Panc1 (cell line): ENCODE measurements at regions of chr1 and their contacts with region 1.

Region 1: GRCh38 chr1:34946211-34946610 is 16.8 kb upstream of the DLGAP3 start:
- DNase-seq: no peak
- ATAC-seq: no peak
- H3K4me3 ChIP-seq: no peak overlapping the region
- H3K27ac ChIP-seq: no peak overlapping the region
- H3K4me1 ChIP-seq: no peaks in the 10 kb centered on the region
- H3K27me3 ChIP-seq: peaks cover 5% of the 10 kb centered on the region; the same call in 1 of the 2 replicates
- CTCF ChIP-seq: no peak

Region 2: DNA sequence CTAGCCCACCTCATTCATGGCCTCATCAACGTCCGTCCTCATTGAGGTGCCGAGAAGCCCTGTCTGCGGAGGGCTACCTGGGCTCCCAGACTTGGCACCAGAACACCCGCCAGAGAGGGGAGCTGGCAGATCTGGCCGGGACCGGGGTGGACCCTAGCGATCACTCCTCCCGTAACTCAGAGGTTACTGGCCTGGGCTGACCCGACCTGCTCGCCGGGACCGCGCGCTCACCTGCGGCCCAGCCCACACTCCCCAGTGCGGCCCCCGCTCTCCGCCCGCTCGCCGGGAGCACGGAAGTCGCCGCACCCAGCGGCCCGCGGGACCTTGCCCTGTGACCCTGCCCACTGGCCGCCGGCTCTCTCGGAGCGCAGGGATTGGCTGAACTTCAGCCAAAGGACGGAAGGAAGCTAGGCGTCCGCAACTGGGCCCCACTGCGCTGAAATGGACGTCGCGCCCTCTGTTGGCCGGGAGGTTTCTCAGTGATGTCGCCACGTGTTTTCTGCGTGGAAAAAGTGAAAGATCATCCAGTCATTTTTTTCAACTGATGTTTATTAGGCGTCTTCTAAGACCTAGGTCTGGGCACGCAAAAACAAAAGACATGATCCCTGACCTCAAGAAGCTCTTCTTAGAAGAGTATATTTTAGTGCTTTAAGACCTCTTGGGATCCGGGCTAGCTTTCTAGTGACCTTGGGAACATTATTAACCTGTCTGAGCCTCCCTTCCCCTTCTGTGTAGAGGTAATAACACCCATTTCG is 86.6 kb before region 1 on chr1 and contains the start of gene SMIM12:
- CTCF ChIA-PET with region 1: no interaction called
- POLR2A ChIA-PET with region 1: interaction called, 14 read pairs
- in situ Hi-C with region 1: no loop called
- intact Hi-C with region 1: no loop called
- DNase-seq: peak; percentile 84
- ATAC-seq: peak; percentile 100
- H3K4me3 ChIP-seq: peak within 1 kb of the TSS; percentile 86 to 100
- H3K27ac ChIP-seq: peak within 1 kb of the TSS; percentile 88
- H3K4me1 ChIP-seq: 0 out of 2 replicates have a peak, but pooled peaks cover 4% of the 10 kb centered on the region
- H3K27me3 ChIP-seq: no peaks in the 10 kb centered on the region
- CTCF ChIP-seq: peak; percentile 95
- total RNA-seq, gene SMIM12: 47.5 TPM